Mammary epithelial cell (primary cell): ENCODE measurements at regions of chr13 and their contacts with region 1.

Region 1: GRCh38 chr13:105920375-105920774 is 615.1 kb downstream of the EFNB2 start:
- DNase-seq: peak; percentile 90
- H3K4me3 ChIP-seq: no peak overlapping the region
- H3K27ac ChIP-seq: peak overlapping the region; percentile 77
- H3K4me1 ChIP-seq: peaks cover 36% of the 10 kb centered on the region
- H3K27me3 ChIP-seq: no peaks in the 10 kb centered on the region
- CTCF ChIP-seq: no peak

Region 2: GRCh38 chr13:105627270-105627669 is 293.1 kb before region 1 on chr13:
- CTCF ChIA-PET with region 1: no interaction called
- dilution Hi-C with region 1: no loop called
- in situ Hi-C with region 1: no loop called
- intact Hi-C with region 1: no loop called
- DNase-seq: no peak
- H3K4me3 ChIP-seq: no peak overlapping the region
- H3K27ac ChIP-seq: no peak overlapping the region
- H3K4me1 ChIP-seq: no peaks in the 10 kb centered on the region
- H3K27me3 ChIP-seq: peaks cover 2% of the 10 kb centered on the region
- CTCF ChIP-seq: no peak

Region 3: GRCh38 chr13:105817021-105817420 is 103.4 kb before region 1 on chr13:
- CTCF ChIA-PET with region 1: no interaction called
- dilution Hi-C with region 1: no loop called
- in situ Hi-C with region 1: loop called in 1 of 2 experiments (anchors 10 kb)
- intact Hi-C with region 1: loop called (anchors 1 kb)
- DNase-seq: peak; percentile 15
- H3K4me3 ChIP-seq: no peak overlapping the region
- H3K27ac ChIP-seq: no peak overlapping the region
- H3K4me1 ChIP-seq: peaks cover 18% of the 10 kb centered on the region
- H3K27me3 ChIP-seq: no peaks in the 10 kb centered on the region
- CTCF ChIP-seq: no peak

Region 4: GRCh38 chr13:105937451-105937850 is 17.1 kb after region 1 on chr13:
- CTCF ChIA-PET with region 1: no interaction called
- dilution Hi-C with region 1: no loop called
- in situ Hi-C with region 1: no loop called
- intact Hi-C with region 1: no loop called
- DNase-seq: no peak
- H3K4me3 ChIP-seq: no peak overlapping the region
- H3K27ac ChIP-seq: no peak overlapping the region
- H3K4me1 ChIP-seq: no peaks in the 10 kb centered on the region
- H3K27me3 ChIP-seq: no peaks in the 10 kb centered on the region
- CTCF ChIP-seq: no peak

Region 5: DNA sequence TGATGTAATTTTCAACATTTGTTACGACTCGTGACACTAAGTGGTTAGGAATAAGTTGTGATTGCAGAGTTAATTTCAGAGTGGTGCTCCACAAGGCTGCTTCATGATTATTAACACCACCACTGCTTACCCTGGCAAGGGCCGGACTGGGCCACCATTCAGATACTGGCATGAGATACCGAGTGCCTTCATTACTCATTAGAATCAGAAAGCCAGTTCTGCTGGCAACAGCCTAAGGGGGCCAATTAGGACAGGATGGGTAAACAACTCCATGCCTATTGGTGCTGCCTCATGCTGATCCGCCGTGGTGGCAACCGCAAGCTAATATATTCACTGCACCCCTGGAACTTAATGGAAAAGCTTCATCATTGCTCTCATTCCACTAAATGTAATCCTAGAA is 40.0 kb after region 1 on chr13:
- CTCF ChIA-PET with region 1: no interaction called
- dilution Hi-C with region 1: no loop called
- in situ Hi-C with region 1: no loop called
- intact Hi-C with region 1: no loop called
- DNase-seq: no peak
- H3K4me3 ChIP-seq: no peak overlapping the region
- H3K27ac ChIP-seq: no peak overlapping the region
- H3K4me1 ChIP-seq: peaks cover 8% of the 10 kb centered on the region
- H3K27me3 ChIP-seq: no peaks in the 10 kb centered on the region
- CTCF ChIP-seq: no peak

Region 6: DNA sequence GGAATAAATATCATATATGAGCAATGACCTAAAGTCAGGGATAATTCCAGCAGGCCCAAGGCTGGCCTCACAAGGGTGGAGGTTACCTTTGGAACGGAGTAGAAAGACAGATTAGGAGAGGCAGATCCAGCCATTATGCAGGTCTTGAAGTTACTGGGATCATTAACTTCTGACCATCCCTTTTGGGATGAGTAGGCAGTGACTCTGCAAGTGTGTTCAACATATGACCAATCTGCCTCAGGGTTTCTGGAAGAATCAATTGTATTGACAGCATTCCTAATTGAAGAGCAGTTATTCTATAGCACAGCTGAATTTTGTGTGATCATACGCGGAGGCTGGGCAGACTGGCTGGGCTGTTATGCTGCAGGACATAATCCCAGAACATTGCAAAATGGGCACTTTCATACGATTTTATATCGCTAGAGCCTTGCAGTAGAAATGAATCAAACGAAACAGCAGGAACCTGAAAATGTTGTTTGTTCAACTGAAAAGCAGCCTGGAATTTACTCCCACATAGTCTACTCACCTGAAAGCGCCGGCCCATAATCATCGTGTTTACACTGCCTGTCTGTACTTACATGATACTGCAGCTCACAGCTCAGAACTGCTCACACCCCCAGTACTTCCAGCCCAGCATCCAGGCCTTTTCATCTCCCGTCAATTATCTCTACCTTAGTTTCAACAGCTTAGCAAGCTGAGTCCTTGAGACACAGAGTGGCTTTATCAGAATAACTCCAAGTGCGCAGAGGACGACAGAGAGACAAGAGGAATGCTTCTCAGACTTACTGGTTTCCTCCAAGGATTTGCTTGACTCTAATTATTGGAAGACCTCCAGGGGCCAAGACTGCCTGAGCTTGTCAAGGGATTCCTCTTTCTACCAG is 59.0 kb after region 1 on chr13:
- CTCF ChIA-PET with region 1: no interaction called
- dilution Hi-C with region 1: no loop called
- in situ Hi-C with region 1: loop called in 1 of 2 experiments (anchors 5 kb)
- intact Hi-C with region 1: no loop called
- DNase-seq: peak; percentile 85
- H3K4me3 ChIP-seq: peak overlapping the region; percentile 5 to 26 (median 14)
- H3K27ac ChIP-seq: peak overlapping the region; percentile 88
- H3K4me1 ChIP-seq: peaks cover 32% of the 10 kb centered on the region
- H3K27me3 ChIP-seq: no peaks in the 10 kb centered on the region
- CTCF ChIP-seq: no peak

Region 7: GRCh38 chr13:106530171-106530851 is 609.9 kb after region 1 on chr13:
- CTCF ChIA-PET with region 1: no interaction called
- dilution Hi-C with region 1: no loop called
- in situ Hi-C with region 1: no loop called
- intact Hi-C with region 1: loop called (anchors 2 kb)
- DNase-seq: no peak
- H3K4me3 ChIP-seq: no peak overlapping the region
- H3K27ac ChIP-seq: no peak overlapping the region
- H3K4me1 ChIP-seq: peaks cover 15% of the 10 kb centered on the region
- H3K27me3 ChIP-seq: no peaks in the 10 kb centered on the region
- CTCF ChIP-seq: no peak